B cell (primary cell): ENCODE measurements at regions of chr14 and their contacts with region 1.

Region 1: GRCh38 chr14:22653012-22653621 is 9.0 kb upstream of the OR6J1 start:
- DNase-seq: peak; percentile 55
- ATAC-seq: peak; percentile 60
- H3K4me3 ChIP-seq: no peak overlapping the region
- H3K4me3 Mint-ChIP-seq: no peak overlapping the region
- H3K27ac ChIP-seq: no peak overlapping the region
- H3K27ac Mint-ChIP-seq: no peak overlapping the region
- H3K4me1 ChIP-seq: no peaks in the 10 kb centered on the region
- H3K4me1 Mint-ChIP-seq: no peaks in the 10 kb centered on the region
- H3K27me3 ChIP-seq: peaks cover 0 to 3% (median 0%) of the 10 kb centered on the region in 4 experiments
- H3K27me3 Mint-ChIP-seq: no peaks in the 10 kb centered on the region
- CTCF ChIP-seq: peak; percentile 73

Region 2: DNA sequence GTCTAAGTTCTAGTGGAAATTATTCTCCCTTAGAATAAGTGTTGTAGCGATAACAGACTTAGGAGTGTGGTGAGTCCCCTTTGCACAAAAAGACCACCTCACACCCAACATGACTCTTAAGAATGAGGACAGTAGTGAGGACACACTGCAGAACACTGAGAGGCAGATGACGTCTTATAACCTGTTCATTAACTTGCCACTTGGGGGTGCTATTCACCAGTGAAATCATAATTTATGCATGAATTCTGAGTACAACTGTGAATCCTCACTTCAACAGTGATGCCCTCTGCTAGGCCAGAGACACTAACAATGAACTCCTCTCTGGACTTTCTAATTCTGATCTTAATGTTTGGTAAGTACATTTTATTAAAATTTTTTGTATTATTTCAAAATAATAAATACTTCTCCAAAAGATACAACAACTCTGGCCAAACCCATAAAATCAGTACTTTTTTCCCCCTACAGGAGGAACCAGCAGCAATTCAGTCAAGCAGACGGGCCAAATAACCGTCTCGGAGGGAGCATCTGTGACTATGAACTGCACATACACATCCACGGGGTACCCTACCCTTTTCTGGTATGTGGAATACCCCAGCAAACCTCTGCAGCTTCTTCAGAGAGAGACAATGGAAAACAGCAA is 338.8 kb before region 1 on chr14:
- CTCF ChIA-PET with region 1: interaction called, 6 read pairs
- POLR2A ChIA-PET with region 1: no interaction called
- intact Hi-C with region 1: loop called (anchors 2 kb)
- DNase-seq: peak; percentile 78
- ATAC-seq: peak; percentile 93
- H3K4me3 ChIP-seq: no peak overlapping the region
- H3K4me3 Mint-ChIP-seq: no peak overlapping the region
- H3K27ac ChIP-seq: no peak overlapping the region
- H3K27ac Mint-ChIP-seq: no peak overlapping the region
- H3K4me1 ChIP-seq: no peaks in the 10 kb centered on the region
- H3K4me1 Mint-ChIP-seq: peaks cover 5% of the 10 kb centered on the region
- H3K27me3 ChIP-seq: no peaks in the 10 kb centered on the region
- H3K27me3 Mint-ChIP-seq: no peaks in the 10 kb centered on the region
- CTCF ChIP-seq: peak; percentile 88

Region 3: GRCh38 chr14:22900081-22900799 is 247.1 kb after region 1 on chr14:
- CTCF ChIA-PET with region 1: interaction called, 17 read pairs
- POLR2A ChIA-PET with region 1: no interaction called
- intact Hi-C with region 1: no loop called
- DNase-seq: peak; percentile 81
- ATAC-seq: peak; percentile 76
- H3K4me3 ChIP-seq: no peak overlapping the region
- H3K4me3 Mint-ChIP-seq: no peak overlapping the region
- H3K27ac ChIP-seq: peak overlapping the region in 1 of 2 donors; percentile 38
- H3K27ac Mint-ChIP-seq: peak overlapping the region; percentile 10
- H3K4me1 ChIP-seq: peaks cover 3 to 6% of the 10 kb centered on the region in 2 donors
- H3K4me1 Mint-ChIP-seq: peaks cover 7% of the 10 kb centered on the region
- H3K27me3 ChIP-seq: no peaks in the 10 kb centered on the region
- H3K27me3 Mint-ChIP-seq: no peaks in the 10 kb centered on the region
- CTCF ChIP-seq: peak; percentile 71

Region 4: DNA sequence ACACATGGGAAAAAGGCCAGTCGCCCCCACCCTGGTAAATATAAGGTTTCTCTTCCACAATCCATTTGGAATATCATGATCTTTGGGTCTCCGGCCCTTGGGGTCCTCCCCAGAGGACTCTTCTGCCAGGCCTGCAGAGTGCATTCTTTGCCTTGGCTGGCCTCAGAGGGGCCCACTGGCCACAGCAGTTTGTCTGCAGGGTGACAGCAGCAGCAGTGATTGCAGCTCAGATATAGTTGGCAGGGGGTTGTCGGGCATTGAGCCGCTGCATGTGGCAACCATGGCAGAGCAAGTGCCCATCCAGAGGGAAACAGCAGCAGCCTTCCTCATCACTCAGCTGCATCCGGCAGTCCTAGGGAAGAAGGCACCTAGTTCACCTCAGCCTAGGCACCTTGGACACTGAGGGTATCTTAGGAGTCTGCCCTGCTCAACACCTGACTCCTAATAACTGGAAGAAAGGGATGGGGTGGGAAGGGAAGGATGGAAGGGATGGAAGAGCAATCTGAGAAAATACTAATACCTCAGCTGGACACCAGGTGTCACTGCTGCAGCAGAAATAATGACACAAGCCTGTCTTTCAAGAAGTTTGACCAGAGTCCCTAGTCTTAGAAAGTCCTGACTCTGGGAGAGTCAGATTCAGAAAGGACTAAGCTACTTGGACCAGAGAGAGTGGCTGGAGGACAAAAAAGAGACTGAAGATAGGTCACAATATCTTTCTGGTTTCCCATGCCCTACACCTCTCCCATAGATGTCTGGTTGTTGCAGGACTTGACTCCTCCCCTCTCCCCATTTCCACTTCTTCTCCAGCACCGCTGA is 320.3 kb after region 1 on chr14:
- CTCF ChIA-PET with region 1: no interaction called
- POLR2A ChIA-PET with region 1: no interaction called
- intact Hi-C with region 1: no loop called
- DNase-seq: peak; percentile 69
- ATAC-seq: peak; percentile 54
- H3K4me3 ChIP-seq: no peak overlapping the region
- H3K4me3 Mint-ChIP-seq: no peak overlapping the region
- H3K27ac ChIP-seq: no peak overlapping the region
- H3K27ac Mint-ChIP-seq: no peak overlapping the region
- H3K4me1 ChIP-seq: peaks cover 0 to 5% of the 10 kb centered on the region in 2 donors
- H3K4me1 Mint-ChIP-seq: peaks cover 4% of the 10 kb centered on the region
- H3K27me3 ChIP-seq: peaks cover 0 to 5% (median 2%) of the 10 kb centered on the region in 4 experiments
- H3K27me3 Mint-ChIP-seq: peaks cover 15% of the 10 kb centered on the region
- CTCF ChIP-seq: peak; percentile 79